GM12878 (cell line): ENCODE measurements at regions of chr1 and their contacts with region 1.

Region 1: GRCh38 chr1:222455188-222455879 is 92.6 kb downstream of the HHIPL2 start:
- DNase-seq: peak; percentile 43
- ATAC-seq: peak; percentile 100
- H3K4me3 ChIP-seq: no peak overlapping the region
- H3K27ac ChIP-seq: no peak overlapping the region
- H3K4me1 ChIP-seq: no peaks in the 10 kb centered on the region
- H3K27me3 ChIP-seq: no peaks in the 10 kb centered on the region
- CTCF ChIP-seq: peak; percentile 91 to 97 (median 97)
- EP300 ChIP-seq: no peak
- POLR2A ChIP-seq: no peak
- RAD21 ChIP-seq: peak; percentile 93

Region 2: DNA sequence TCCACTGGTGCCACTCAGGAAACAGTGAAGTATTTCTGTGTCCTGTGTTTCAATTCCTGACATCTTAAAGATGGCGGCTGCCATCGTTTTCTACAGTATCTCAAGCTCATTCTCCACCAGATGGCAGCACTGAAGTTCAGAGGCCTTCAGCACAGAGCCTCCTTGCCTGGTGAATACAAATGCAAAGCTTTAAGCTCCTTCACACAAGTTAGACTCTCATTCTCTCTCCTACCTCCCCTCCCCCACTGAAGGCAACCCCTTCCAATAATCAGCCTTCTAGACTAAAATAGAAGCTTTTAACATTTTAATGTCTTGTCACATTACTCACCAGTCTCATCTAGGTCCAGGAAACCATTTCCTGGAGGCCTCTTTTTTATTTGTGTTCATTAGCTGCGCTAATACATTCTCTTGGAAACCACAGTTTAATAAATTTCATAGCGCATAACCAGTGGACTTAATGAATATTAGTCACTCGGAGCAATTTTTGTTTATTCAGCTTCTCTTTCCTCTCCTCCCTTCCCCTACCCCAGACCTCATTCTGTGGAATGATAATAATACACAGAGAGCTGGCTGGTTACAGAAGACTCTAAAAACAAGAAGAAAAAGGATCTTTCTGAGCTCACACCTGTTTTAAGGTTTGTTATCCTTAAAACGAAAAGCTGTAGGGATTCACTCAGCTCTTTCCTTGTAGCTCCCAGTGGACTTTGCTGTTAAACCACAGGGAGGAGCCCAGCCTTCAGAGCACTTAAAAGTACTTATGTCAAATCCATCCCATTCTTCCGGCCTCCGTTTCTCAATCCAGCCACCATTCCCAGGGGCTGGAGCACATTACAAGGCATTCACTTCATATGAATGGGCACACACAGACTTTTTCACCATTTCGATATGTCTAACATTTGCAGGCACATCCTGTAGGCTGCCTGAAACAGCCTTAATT is 1191.2 kb before region 1 on chr1:
- CTCF ChIA-PET with region 1: interaction called, 16 read pairs
- POLR2A ChIA-PET with region 1: no interaction called
- RAD21 ChIA-PET with region 1: interaction called, 8 read pairs
- SMC1A ChIA-PET with region 1: no interaction called
- in situ Hi-C with region 1: no loop called
- intact Hi-C with region 1: loop called (anchors 5 kb)
- DNase-seq: peak; percentile 5
- ATAC-seq: peak; percentile 97
- H3K4me3 ChIP-seq: no peak overlapping the region
- H3K27ac ChIP-seq: no peak overlapping the region
- H3K4me1 ChIP-seq: no peaks in the 10 kb centered on the region
- H3K27me3 ChIP-seq: no peaks in the 10 kb centered on the region
- CTCF ChIP-seq: peak; percentile 47 to 57 (median 51); a peak in 5 of 6 replicates
- EP300 ChIP-seq: no peak
- POLR2A ChIP-seq: no peak
- RAD21 ChIP-seq: peak; percentile 51

Region 3: GRCh38 chr1:221478050-221478949 is 977.0 kb before region 1 on chr1:
- CTCF ChIA-PET with region 1: interaction called, 20 read pairs
- POLR2A ChIA-PET with region 1: no interaction called
- RAD21 ChIA-PET with region 1: interaction called, 8 read pairs
- SMC1A ChIA-PET with region 1: interaction called, 12 read pairs
- in situ Hi-C with region 1: loop called (anchors 5 kb)
- intact Hi-C with region 1: loop called (anchors 1 kb)
- DNase-seq: peak; percentile 36
- ATAC-seq: peak; percentile 100
- H3K4me3 ChIP-seq: no peak overlapping the region
- H3K27ac ChIP-seq: no peak overlapping the region
- H3K4me1 ChIP-seq: no peaks in the 10 kb centered on the region
- H3K27me3 ChIP-seq: no peaks in the 10 kb centered on the region; a peak in 1 of 4 replicates
- CTCF ChIP-seq: peak; percentile 76 to 95 (median 87); a peak in 5 of 6 replicates
- EP300 ChIP-seq: no peak
- POLR2A ChIP-seq: no peak
- RAD21 ChIP-seq: peak; percentile 92

Region 4: DNA sequence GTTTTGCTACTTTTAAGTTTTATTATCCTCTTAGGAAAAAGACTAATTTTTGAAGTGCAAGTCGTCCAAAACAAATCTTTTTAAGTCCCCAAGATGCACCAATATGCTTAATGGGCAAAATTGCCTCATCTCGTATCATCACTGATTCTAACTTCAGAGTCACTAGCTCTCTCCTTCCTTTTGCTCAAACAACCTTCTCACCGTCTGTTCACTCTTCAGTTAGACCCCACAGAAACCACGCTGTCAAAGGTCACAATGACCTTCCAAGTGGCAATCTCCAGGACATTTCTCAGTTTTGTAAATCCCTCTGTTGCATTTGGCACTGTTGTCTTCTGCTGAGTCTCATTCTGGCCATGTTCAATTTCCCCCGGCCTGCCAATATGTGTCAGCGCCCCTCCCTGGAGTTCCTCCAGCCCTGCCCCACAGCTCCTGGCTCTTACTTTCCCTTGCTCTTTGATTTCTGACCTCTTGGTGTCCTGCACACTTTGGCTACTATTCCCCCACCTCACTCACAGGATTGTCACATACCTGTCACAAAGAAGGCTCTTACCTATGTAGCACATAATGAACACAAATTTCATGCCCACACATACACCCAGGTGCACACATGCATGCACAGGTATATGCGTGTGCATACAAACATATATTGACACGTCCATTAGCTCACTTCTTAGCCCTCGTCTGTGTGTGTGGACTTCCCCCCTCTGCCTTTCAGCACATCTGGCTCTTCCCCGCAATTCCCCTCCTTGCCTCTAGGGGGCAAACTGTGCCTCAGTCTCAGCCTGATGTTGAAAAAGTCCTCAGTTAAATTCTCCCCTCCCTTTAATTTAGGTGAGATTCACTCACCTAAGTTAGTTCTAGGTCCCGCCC is 359.5 kb before region 1 on chr1:
- CTCF ChIA-PET with region 1: interaction called, 11 read pairs
- POLR2A ChIA-PET with region 1: no interaction called
- RAD21 ChIA-PET with region 1: no interaction called
- SMC1A ChIA-PET with region 1: no interaction called
- in situ Hi-C with region 1: no loop called
- intact Hi-C with region 1: loop called (anchors 5 kb)
- DNase-seq: peak; percentile 25
- ATAC-seq: peak; percentile 95
- H3K4me3 ChIP-seq: no peak overlapping the region
- H3K27ac ChIP-seq: no peak overlapping the region
- H3K4me1 ChIP-seq: no peaks in the 10 kb centered on the region
- H3K27me3 ChIP-seq: no peaks in the 10 kb centered on the region
- CTCF ChIP-seq: peak; percentile 68 to 98 (median 94)
- EP300 ChIP-seq: no peak
- POLR2A ChIP-seq: no peak
- RAD21 ChIP-seq: peak; percentile 67

Region 5: DNA sequence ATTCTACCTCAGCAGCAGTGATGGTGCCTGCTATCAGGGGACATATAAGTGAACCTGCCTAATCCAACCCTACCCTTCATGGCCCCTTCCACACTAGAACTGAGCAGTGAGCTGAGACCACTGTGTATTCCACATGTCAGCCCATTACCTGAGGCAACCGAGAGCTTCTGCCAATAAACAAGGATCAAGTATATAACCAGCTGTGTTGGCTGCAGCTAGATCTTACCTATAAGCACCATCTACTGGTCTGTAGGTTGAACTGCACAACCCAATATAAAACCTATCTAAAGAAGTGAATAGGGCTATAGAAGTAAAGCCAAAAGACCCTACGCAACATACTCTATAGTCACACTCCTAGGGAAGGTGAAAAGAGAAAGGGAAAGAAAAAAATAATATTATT is 284.3 kb before region 1 on chr1:
- CTCF ChIA-PET with region 1: interaction called, 7 read pairs
- POLR2A ChIA-PET with region 1: no interaction called
- RAD21 ChIA-PET with region 1: interaction called, 6 read pairs
- SMC1A ChIA-PET with region 1: no interaction called
- in situ Hi-C with region 1: no loop called
- intact Hi-C with region 1: loop called (anchors 10 kb)
- DNase-seq: peak; percentile 23
- ATAC-seq: peak; percentile 86
- H3K4me3 ChIP-seq: no peak overlapping the region
- H3K27ac ChIP-seq: no peak overlapping the region
- H3K4me1 ChIP-seq: no peaks in the 10 kb centered on the region
- H3K27me3 ChIP-seq: no peaks in the 10 kb centered on the region
- CTCF ChIP-seq: peak; percentile 47 to 78 (median 66)
- EP300 ChIP-seq: no peak
- POLR2A ChIP-seq: no peak
- RAD21 ChIP-seq: peak; percentile 78

Region 6: DNA sequence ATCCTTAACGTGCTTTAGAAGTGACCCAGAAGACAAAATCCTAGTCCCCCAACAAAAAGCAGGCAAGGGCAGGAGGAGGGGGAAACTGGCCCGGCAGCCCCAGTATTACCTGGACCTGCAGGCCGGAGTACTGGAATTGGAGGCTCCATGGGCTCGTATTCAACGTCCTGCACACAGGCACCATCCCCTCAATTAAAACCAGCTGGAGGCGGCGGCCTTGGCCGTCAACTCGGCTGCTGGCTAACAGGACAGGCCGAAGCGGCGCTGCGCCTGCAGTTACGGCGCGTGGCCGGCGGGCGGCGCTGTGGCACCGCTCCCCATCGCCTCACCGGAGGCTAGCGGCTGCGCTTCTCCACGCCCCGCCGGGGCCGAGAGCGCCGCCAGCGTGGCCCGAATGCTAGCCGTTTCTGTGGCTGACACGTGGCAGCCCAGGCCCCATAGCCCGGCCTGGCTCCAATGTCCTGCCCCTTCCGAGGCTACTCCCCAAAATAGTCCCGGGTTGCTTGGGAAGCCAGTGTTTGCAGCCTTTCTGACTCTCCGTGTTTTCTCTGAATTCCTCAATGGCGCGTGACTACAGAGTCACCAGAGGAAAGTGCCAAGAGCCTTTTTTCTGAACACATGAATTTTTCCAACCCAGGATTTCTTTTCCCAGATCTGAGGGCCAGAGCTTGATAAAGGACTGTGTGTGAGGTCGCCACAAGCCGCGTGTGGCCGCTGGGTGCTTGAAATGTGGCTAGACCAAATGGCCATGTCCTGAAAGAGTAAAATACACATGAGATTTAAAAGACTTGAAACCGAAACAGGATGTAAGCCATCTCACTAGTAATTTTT is 10.1 kb after region 1 on chr1:
- CTCF ChIA-PET with region 1: interaction called, 18 read pairs
- POLR2A ChIA-PET with region 1: no interaction called
- RAD21 ChIA-PET with region 1: interaction called, 4 read pairs
- SMC1A ChIA-PET with region 1: interaction called, 5 read pairs
- in situ Hi-C with region 1: no loop called
- intact Hi-C with region 1: no loop called
- DNase-seq: peak; percentile 57
- ATAC-seq: peak; percentile 98
- H3K4me3 ChIP-seq: peak overlapping the region; percentile 68; the same call in 1 of the 2 replicates
- H3K27ac ChIP-seq: peak overlapping the region; percentile 62
- H3K4me1 ChIP-seq: no peaks in the 10 kb centered on the region
- H3K27me3 ChIP-seq: peaks cover 2 to 5% of the 10 kb centered on the region in 2 experiments; a peak in 2 of 4 replicates
- CTCF ChIP-seq: peak; percentile 96 to 99 (median 96)
- EP300 ChIP-seq: no peak
- POLR2A ChIP-seq: peak; percentile 47; the same call in 1 of the 2 replicates
- RAD21 ChIP-seq: peak; percentile 73

Region 7: DNA sequence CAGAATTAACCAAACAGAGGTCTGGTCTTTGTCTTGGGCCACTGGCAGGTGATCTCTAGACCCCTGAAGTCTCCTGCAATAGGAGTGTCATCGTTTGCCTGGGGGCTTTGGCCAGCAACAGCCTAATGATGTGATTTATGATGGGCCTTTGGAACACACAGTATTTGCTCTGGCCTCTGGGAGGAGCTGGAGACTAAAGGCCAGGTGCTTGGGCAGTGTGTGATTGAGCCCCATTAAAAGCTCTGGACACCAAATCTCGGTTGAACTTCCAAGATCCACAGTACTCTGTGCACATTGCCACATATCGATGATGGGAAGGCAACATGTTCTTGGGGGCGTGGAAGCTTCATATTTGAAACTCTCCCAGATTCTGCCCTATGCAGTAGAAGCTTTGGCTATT is 719.7 kb after region 1 on chr1:
- CTCF ChIA-PET with region 1: no interaction called
- POLR2A ChIA-PET with region 1: no interaction called
- RAD21 ChIA-PET with region 1: no interaction called
- SMC1A ChIA-PET with region 1: no interaction called
- in situ Hi-C with region 1: no loop called
- intact Hi-C with region 1: no loop called
- DNase-seq: no peak
- ATAC-seq: peak; percentile 85
- H3K4me3 ChIP-seq: no peak overlapping the region
- H3K27ac ChIP-seq: no peak overlapping the region
- H3K4me1 ChIP-seq: no peaks in the 10 kb centered on the region
- H3K27me3 ChIP-seq: no peaks in the 10 kb centered on the region; a peak in 1 of 4 replicates
- CTCF ChIP-seq: peak in 2 of 3 experiments; percentile 7 to 41; a peak in 1 of 6 replicates
- EP300 ChIP-seq: no peak
- POLR2A ChIP-seq: no peak
- RAD21 ChIP-seq: peak; percentile 19; the same call in 1 of the 2 replicates